ENCODE measurements at regions of chr1 and their contacts with region 1.

Region 1: GRCh38 chr1:95233737-95234500 is at the start of gene RWDD3:
- DNase-seq: peak; percentile 94
- H3K4me3 Mint-ChIP-seq: peak within 1 kb of the TSS; percentile 94
- H3K27ac Mint-ChIP-seq: peak within 1 kb of the TSS; percentile 77
- H3K4me1 Mint-ChIP-seq: peaks cover 28% of the 10 kb centered on the region
- H3K27me3 Mint-ChIP-seq: peaks cover 16% of the 10 kb centered on the region
- total RNA-seq, gene RWDD3: 16.5 to 17.9 TPM

Region 2: GRCh38 chr1:94854458-94855306 is 379.2 kb before region 1 on chr1:
- CTCF ChIA-PET with region 1: interaction called, 15 read pairs
- POLR2A ChIA-PET with region 1: interaction called, 5 read pairs
- DNase-seq: peak; percentile 81
- H3K4me3 Mint-ChIP-seq: no peak overlapping the region
- H3K27ac Mint-ChIP-seq: no peak overlapping the region
- H3K4me1 Mint-ChIP-seq: no peaks in the 10 kb centered on the region
- H3K27me3 Mint-ChIP-seq: peaks cover 7% of the 10 kb centered on the region

Region 3: GRCh38 chr1:95072532-95073419 is 161.1 kb before region 1 on chr1 and contains the start of gene ALG14:
- CTCF ChIA-PET with region 1: interaction called, 28 read pairs
- POLR2A ChIA-PET with region 1: interaction called, 15 read pairs
- DNase-seq: peak; percentile 93
- H3K4me3 Mint-ChIP-seq: peak within 1 kb of the TSS; percentile 92
- H3K27ac Mint-ChIP-seq: peak within 1 kb of the TSS; percentile 85
- H3K4me1 Mint-ChIP-seq: peaks cover 19% of the 10 kb centered on the region
- H3K27me3 Mint-ChIP-seq: no peaks in the 10 kb centered on the region
- total RNA-seq, gene ALG14: 2.4 to 2.7 TPM

Region 4: DNA sequence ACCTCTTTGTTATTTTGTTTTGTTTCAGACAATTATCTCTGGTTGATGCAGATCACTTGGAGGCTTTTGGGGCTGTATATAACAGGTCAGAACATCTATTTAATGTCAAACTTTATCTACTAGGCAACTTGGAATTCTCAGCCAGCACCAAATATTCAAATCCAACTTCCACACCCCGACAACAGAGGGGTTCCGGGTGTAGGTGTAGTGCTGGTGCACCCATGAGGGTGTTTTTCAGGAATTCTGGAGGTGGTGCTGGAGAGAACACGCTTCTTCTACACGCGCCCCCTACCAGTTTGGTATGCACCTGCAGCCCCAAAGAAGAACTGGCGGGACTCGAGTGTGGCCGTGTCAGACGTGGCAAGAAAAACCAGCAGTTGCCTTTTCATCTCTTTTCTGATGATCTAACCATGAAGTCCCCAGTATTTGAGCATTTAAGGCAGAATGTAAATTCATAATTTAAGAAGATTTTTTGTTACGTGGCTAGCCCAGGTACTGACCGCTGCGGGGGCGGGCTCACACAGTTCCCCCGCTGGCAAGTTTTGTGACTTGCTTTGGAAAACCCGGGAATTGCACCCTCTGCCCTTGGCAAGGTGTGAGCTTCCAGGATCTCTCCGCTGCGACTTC is 117.2 kb before region 1 on chr1:
- CTCF ChIA-PET with region 1: interaction called, 19 read pairs
- POLR2A ChIA-PET with region 1: no interaction called
- DNase-seq: peak; percentile 34
- H3K4me3 Mint-ChIP-seq: peak overlapping the region; percentile 73
- H3K27ac Mint-ChIP-seq: no peak overlapping the region
- H3K4me1 Mint-ChIP-seq: peaks cover 9% of the 10 kb centered on the region
- H3K27me3 Mint-ChIP-seq: peaks cover 53% of the 10 kb centered on the region

Region 5: GRCh38 chr1:95249916-95250315 is 16.0 kb after region 1 on chr1:
- CTCF ChIA-PET with region 1: interaction called, 36 read pairs
- POLR2A ChIA-PET with region 1: interaction called, 8 read pairs
- DNase-seq: no peak
- H3K4me3 Mint-ChIP-seq: no peak overlapping the region
- H3K27ac Mint-ChIP-seq: no peak overlapping the region
- H3K4me1 Mint-ChIP-seq: no peaks in the 10 kb centered on the region
- H3K27me3 Mint-ChIP-seq: no peaks in the 10 kb centered on the region